ENCODE measurements at regions of chr6 and their contacts with region 1.

Region 1: GRCh38 chr6:26103770-26104456 is 16.7 kb downstream of the HFE start:
- DNase-seq: peak; percentile 86 to 95
- ATAC-seq: peak; percentile 87 to 96 (median 88)
- H3K4me3 ChIP-seq: peak overlapping the region; percentile 41
- H3K4me3 Mint-ChIP-seq: peak overlapping the region; percentile 90
- H3K27ac ChIP-seq: peak overlapping the region; percentile 84
- H3K27ac Mint-ChIP-seq: peak overlapping the region; percentile 98 to 99
- H3K4me1 ChIP-seq: peaks cover 10% of the 10 kb centered on the region
- H3K4me1 Mint-ChIP-seq: peaks cover 18% of the 10 kb centered on the region in 2 donors
- H3K27me3 ChIP-seq: no peaks in the 10 kb centered on the region
- H3K27me3 Mint-ChIP-seq: no peaks in the 10 kb centered on the region
- CTCF ChIP-seq: peak; percentile 41

Region 2: GRCh38 chr6:26054857-26055669 is 48.9 kb before region 1 on chr6:
- intact Hi-C with region 1: loop called (anchors 2 kb)
- DNase-seq: peak; percentile 83 to 92
- ATAC-seq: peak; percentile 71 to 82 (median 71)
- H3K4me3 ChIP-seq: peak overlapping the region; percentile 78
- H3K4me3 Mint-ChIP-seq: peak overlapping the region; percentile 96
- H3K27ac ChIP-seq: peak overlapping the region; percentile 92
- H3K27ac Mint-ChIP-seq: peak overlapping the region; percentile 98 to 99
- H3K4me1 ChIP-seq: peaks cover 19% of the 10 kb centered on the region
- H3K4me1 Mint-ChIP-seq: peaks cover 29 to 35% of the 10 kb centered on the region in 2 donors
- H3K27me3 ChIP-seq: no peaks in the 10 kb centered on the region
- H3K27me3 Mint-ChIP-seq: no peaks in the 10 kb centered on the region
- CTCF ChIP-seq: no peak

Measured in natural killer cell (primary cell).